PC-9 (cell line): ENCODE measurements at regions of chr2 and their contacts with region 1.

Region 1: DNA sequence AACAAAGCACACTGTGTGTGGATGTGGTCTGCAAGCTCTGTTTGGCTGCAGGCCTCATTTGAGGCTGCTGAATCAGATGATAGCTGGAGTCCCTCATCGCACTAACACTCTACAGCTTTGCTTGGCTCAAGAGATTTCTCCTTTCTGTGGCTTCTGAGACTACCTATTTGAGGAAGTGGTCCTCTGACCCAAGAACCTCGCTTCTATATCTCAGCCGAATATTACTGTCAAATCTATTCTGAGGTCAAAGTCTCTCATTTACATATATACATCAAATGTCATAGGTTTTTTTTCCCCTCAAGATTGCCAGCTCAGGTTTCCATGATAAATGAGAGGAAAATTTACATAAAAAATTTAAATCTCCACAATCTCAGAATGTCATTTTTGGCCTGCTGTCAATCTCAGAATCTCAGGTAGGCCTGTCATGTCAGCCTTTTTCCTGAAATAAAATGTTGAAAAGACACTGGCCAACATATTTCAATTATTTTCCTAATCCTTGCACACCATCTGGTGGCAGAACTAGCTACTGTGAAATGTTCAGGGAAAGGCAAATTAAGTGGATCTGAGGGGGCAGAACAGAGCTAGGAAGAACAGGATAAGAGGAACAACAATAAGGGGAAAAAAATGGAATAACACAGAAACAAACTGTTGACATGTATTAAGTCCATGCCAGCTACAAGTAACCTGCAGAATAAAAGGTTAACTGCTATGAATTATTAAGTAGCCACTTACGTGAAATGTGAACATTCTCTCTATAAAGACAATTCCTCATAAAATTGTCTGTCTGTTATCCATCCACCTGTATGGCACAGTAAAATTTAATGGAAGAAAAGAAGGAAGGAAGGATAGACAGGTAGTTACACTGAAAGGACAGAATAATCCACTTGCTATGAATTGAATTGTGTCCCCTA is 39.3 kb downstream of the AP1S3 start:
- DNase-seq: peak; percentile 46 to 73
- H3K4me3 ChIP-seq: no peak overlapping the region
- H3K27ac ChIP-seq: peak overlapping the region; percentile 95
- H3K4me1 ChIP-seq: peaks cover 76% of the 10 kb centered on the region
- H3K27me3 ChIP-seq: no peaks in the 10 kb centered on the region
- CTCF ChIP-seq: peak; percentile 95

Region 2: GRCh38 chr2:222959336-222959735 is 838.7 kb before region 1 on chr2:
- CTCF ChIA-PET with region 1: no interaction called
- POLR2A ChIA-PET with region 1: no interaction called
- intact Hi-C with region 1: loop called (anchors 5 kb)
- DNase-seq: peak; percentile 96 to 98
- H3K4me3 ChIP-seq: no peak overlapping the region
- H3K27ac ChIP-seq: peak overlapping the region; percentile 55
- H3K4me1 ChIP-seq: peaks cover 18% of the 10 kb centered on the region
- H3K27me3 ChIP-seq: no peaks in the 10 kb centered on the region
- CTCF ChIP-seq: peak; percentile 79

Region 3: GRCh38 chr2:223262946-223263345 is 535.1 kb before region 1 on chr2:
- CTCF ChIA-PET with region 1: no interaction called
- POLR2A ChIA-PET with region 1: no interaction called
- intact Hi-C with region 1: loop called (anchors 5 kb)
- DNase-seq: peak; percentile 63 to 73
- H3K4me3 ChIP-seq: no peak overlapping the region
- H3K27ac ChIP-seq: no peak overlapping the region
- H3K4me1 ChIP-seq: peaks cover 11% of the 10 kb centered on the region
- H3K27me3 ChIP-seq: no peaks in the 10 kb centered on the region
- CTCF ChIP-seq: no peak

Region 4: DNA sequence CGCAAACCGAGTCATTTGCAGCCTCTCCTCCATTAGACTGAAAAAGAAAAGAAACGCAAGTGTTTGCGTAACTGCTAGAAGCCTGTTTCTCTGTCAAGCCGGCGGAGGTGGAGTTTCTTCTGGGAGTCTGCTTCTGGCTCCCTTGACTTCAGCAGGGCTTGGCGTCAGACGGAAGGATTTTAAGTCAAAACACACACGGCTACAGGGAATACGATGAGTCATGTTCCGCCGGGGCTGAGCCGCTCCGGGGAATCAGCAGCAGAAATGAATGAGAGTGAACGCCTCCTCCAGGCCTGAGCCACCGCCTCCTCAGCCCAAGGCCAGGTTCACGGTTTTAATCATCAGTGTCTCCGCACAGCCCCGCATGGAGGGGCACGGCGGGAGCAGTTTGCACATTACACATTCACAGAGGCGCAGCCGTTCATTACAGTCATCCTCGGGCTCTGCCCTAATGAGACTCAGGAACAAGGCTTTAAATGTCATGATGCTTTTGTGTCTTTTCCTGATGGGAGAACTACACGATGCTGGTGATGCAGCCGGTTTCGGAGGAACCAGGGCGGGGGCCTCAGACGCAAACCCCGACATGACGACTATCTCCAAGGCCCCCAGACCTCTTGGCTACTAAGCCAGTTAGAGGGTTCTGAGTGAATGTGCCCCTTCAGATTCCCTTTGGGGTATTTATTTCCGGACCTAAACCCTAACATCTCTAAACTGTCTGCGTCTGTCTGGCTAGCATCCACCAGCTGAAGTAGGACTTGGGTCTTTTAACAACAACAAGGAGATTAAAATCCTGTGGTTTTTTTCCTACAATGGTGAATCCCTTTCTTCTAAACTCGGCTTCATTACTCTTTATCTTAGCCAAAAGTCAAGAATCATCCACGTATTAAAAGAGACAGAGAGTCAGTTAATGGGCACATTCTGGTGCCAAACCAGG is 184.8 kb before region 1 on chr2:
- CTCF ChIA-PET with region 1: no interaction called
- POLR2A ChIA-PET with region 1: no interaction called
- intact Hi-C with region 1: loop called (anchors 2 kb)
- DNase-seq: peak; percentile 94 to 97
- H3K4me3 ChIP-seq: peak overlapping the region; percentile 53; the same call in 1 of the 2 replicates
- H3K27ac ChIP-seq: peak overlapping the region; percentile 59
- H3K4me1 ChIP-seq: peaks cover 20% of the 10 kb centered on the region
- H3K27me3 ChIP-seq: no peaks in the 10 kb centered on the region
- CTCF ChIP-seq: 0 out of 2 replicates have a peak, but pooled peaks have one; percentile 18

Region 5: GRCh38 chr2:223779877-223780276 is 18.2 kb before region 1 on chr2:
- CTCF ChIA-PET with region 1: interaction called, 8 read pairs
- POLR2A ChIA-PET with region 1: no interaction called
- intact Hi-C with region 1: loop called (anchors 1 kb)
- DNase-seq: peak; percentile 58 to 69
- H3K4me3 ChIP-seq: no peak overlapping the region
- H3K27ac ChIP-seq: no peak overlapping the region
- H3K4me1 ChIP-seq: no peaks in the 10 kb centered on the region
- H3K27me3 ChIP-seq: no peaks in the 10 kb centered on the region
- CTCF ChIP-seq: peak; percentile 84

Region 6: DNA sequence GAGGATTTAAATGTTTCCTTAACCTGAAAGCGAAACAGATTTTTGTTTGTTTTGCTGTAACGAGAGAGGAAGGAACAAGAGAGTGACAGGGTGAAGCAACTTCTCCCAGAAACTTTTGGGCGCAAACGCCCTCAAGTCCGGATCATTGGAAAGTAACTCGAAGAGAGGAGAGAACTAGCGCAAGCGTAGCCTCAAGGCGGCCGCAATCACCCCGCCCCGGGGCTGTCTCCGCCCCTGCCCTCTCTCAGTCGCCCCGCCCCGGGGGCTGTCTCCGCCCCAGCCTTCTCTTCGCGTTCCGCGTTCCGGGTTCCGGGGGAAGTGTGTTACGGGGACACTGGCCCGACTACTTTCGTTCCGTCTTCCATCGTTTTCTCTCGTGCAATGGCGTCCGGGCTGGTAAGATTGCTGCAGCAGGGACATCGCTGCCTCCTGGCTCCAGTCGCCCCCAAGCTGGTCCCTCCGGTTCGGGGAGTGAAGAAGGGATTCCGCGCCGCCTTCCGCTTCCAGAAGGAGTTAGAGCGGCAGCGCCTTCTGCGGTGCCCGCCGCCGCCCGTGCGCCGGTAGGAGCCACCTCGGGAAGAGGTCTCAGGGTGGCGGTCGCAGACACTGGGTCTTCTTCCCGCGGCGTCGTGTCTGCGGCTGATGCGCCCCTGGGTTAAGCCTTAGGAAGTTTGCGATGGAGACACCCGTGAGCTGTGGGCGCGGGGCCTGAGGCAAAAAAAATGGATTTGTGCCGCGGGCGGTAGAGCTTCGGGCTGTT is 159.2 kb after region 1 on chr2 and contains the start of gene MRPL44:
- CTCF ChIA-PET with region 1: no interaction called
- POLR2A ChIA-PET with region 1: interaction called, 3 read pairs
- intact Hi-C with region 1: loop called (anchors 1 kb)
- DNase-seq: peak; percentile 92 to 100
- H3K4me3 ChIP-seq: peak within 1 kb of the TSS; percentile 81
- H3K27ac ChIP-seq: peak within 1 kb of the TSS; percentile 73
- H3K4me1 ChIP-seq: peaks cover 37% of the 10 kb centered on the region
- H3K27me3 ChIP-seq: no peaks in the 10 kb centered on the region
- CTCF ChIP-seq: 0 out of 2 replicates have a peak, but pooled peaks have one; percentile 7
- total RNA-seq, gene MRPL44: 66.4 and 76.6 TPM in 2 replicates